ENCODE measurements at regions of chr11 and their contacts with region 1.

Region 1: DNA sequence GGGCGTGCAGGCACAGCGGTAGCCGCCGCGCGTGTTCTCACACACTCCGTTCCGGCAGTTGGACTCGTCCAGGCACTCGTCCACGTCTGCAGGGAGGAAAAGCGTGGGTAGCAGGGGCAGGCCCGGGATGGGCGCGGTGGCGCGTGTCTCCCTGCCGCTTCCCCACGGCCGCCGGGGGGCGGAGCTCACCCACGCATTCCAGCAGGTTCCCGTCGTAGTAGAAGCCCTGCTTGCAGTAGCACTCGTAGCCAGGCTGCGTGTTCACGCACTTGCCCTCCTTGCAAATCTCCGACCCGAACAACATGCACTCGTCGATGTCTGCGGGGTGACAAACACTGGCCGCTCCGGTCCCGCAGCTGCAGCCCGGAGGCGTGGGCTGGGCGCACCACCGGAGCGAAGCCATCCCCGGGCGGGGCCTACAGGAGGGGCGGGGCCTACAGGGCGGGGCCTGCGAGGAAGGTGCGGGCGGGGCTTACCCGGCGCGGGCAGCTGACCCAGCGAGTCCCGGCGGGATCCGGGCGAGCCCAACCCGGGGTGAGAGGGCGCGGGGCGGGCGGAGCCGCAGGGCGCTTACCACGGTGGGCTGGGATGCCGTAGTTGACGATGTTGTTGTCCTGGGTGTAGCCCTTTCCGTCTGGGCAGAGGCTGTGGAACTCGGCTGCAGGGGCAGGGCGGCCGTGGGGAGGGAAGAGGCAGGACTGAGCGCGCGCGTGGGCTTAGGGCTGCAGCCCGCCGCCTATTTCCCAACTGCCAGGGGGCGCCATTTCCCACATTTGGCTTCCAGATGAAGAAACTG is 15.6 kb downstream of the SCYL1 start:
- DNase-seq: peak; percentile 79 to 99 (median 86)
- ATAC-seq: peak; percentile 77 to 84
- H3K4me3 Mint-ChIP-seq: peak overlapping the region; percentile 77 to 90 (median 85)
- H3K27ac Mint-ChIP-seq: peak overlapping the region; percentile 80 to 96 (median 86)
- H3K4me1 Mint-ChIP-seq: peaks cover 15 to 41% (median 31%) of the 10 kb centered on the region in 4 donors
- H3K27me3 Mint-ChIP-seq: no peaks in the 10 kb centered on the region

Region 2: GRCh38 chr11:65524741-65525545 is 15.6 kb before region 1 on chr11 and contains the start of gene SCYL1:
- POLR2A ChIA-PET with region 1: interaction called, 69 read pairs
- DNase-seq: peak; percentile 68 to 91 (median 80)
- ATAC-seq: peak; percentile 64 to 73
- H3K4me3 Mint-ChIP-seq: peak within 1 kb of the TSS; percentile 77 to 96 (median 88)
- H3K27ac Mint-ChIP-seq: peak within 1 kb of the TSS; percentile 90 to 99 (median 95)
- H3K4me1 Mint-ChIP-seq: peaks cover 36 to 66% (median 61%) of the 10 kb centered on the region in 4 donors
- H3K27me3 Mint-ChIP-seq: no peaks in the 10 kb centered on the region
- polyA plus RNA-seq, gene SCYL1: 23.2 to 41.5 (median 33.5) TPM

Region 3: GRCh38 chr11:65551572-65552398 is 11.3 kb after region 1 on chr11:
- POLR2A ChIA-PET with region 1: interaction called, 149 read pairs
- DNase-seq: peak in 7 of 10 donors; percentile 33 to 77 (median 49)
- ATAC-seq: peak; percentile 25 to 30
- H3K4me3 Mint-ChIP-seq: peak overlapping the region; percentile 16 to 91 (median 63)
- H3K27ac Mint-ChIP-seq: peak overlapping the region; percentile 61 to 93 (median 82)
- H3K4me1 Mint-ChIP-seq: peaks cover 51 to 77% (median 75%) of the 10 kb centered on the region in 4 donors
- H3K27me3 Mint-ChIP-seq: no peaks in the 10 kb centered on the region

Region 4: GRCh38 chr11:65575568-65576231 is 35.2 kb after region 1 on chr11 and contains the start of gene EHBP1L1:
- POLR2A ChIA-PET with region 1: interaction called, 260 read pairs
- DNase-seq: peak; percentile 65 to 90 (median 78)
- ATAC-seq: peak; percentile 41 to 45
- H3K4me3 Mint-ChIP-seq: peak within 1 kb of the TSS; percentile 89 to 99 (median 93)
- H3K27ac Mint-ChIP-seq: peak within 1 kb of the TSS; percentile 89 to 99 (median 97)
- H3K4me1 Mint-ChIP-seq: peaks cover 30 to 73% (median 60%) of the 10 kb centered on the region in 4 donors
- H3K27me3 Mint-ChIP-seq: no peaks in the 10 kb centered on the region
- polyA plus RNA-seq, gene EHBP1L1: 10.8 to 19.8 (median 11.5) TPM

Region 5: DNA sequence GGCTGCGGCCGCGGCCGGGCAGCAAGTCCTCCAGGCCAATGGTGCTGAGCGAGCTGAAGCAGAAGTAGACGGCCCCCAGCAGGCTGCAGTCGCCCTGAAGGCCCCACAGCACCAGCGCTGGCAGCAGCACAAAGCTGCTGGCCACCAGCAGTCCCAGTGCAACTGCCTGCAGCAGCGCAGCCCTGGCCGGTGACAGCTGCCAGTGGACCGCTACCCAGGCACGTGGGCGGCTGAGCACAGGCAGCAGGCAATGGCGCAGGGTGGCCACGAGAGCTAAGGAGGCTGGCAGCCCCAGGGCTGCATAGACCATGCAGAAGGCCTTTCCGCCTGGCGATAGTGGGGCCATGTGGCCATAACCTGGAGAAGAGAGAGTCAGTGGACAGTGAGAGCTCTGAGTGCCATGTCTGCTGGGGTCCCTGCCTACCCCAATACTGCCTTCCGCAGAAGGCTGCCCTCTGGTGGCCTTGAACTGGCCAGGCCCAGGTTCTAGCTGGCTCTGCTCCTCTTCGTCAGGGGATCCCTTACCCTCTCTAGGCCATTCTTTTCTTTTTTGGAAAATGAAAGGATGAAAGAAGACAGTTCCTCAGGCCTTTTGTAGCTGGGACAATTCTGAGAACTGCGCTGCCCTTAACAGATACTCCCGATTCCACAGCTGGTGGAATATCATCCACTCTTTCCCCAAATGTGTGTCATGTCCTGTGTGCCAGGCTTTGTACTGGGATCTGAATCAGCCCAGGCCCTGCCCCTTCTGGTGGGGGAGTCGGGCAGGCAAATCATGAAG is 53.2 kb after region 1 on chr11:
- POLR2A ChIA-PET with region 1: interaction called, 67 read pairs
- DNase-seq: peak in 8 of 10 donors; percentile 35 to 74 (median 54)
- ATAC-seq: peak; percentile 67 to 80
- H3K4me3 Mint-ChIP-seq: peak overlapping the region in 1 of 10 donors; percentile 15
- H3K27ac Mint-ChIP-seq: peak overlapping the region in 4 of 10 donors; percentile 9 to 75 (median 37)
- H3K4me1 Mint-ChIP-seq: peaks cover 13 to 34% (median 23%) of the 10 kb centered on the region in 4 donors
- H3K27me3 Mint-ChIP-seq: no peaks in the 10 kb centered on the region